ENCODE measurements at regions of chr1 and their contacts with region 1.

Region 1: GRCh38 chr1:180482425-180483275 is 19.7 kb downstream of the ACBD6 start:
- DNase-seq: no peak
- H3K4me3 ChIP-seq: no peak overlapping the region
- CTCF ChIP-seq: no peak
- POLR2A ChIP-seq: no peak

Region 2: GRCh38 chr1:180003026-180003695 is 479.5 kb before region 1 on chr1:
- intact Hi-C with region 1: no loop called
- DNase-seq: no peak
- H3K4me3 ChIP-seq: no peak overlapping the region
- CTCF ChIP-seq: no peak
- POLR2A ChIP-seq: no peak

Region 3: DNA sequence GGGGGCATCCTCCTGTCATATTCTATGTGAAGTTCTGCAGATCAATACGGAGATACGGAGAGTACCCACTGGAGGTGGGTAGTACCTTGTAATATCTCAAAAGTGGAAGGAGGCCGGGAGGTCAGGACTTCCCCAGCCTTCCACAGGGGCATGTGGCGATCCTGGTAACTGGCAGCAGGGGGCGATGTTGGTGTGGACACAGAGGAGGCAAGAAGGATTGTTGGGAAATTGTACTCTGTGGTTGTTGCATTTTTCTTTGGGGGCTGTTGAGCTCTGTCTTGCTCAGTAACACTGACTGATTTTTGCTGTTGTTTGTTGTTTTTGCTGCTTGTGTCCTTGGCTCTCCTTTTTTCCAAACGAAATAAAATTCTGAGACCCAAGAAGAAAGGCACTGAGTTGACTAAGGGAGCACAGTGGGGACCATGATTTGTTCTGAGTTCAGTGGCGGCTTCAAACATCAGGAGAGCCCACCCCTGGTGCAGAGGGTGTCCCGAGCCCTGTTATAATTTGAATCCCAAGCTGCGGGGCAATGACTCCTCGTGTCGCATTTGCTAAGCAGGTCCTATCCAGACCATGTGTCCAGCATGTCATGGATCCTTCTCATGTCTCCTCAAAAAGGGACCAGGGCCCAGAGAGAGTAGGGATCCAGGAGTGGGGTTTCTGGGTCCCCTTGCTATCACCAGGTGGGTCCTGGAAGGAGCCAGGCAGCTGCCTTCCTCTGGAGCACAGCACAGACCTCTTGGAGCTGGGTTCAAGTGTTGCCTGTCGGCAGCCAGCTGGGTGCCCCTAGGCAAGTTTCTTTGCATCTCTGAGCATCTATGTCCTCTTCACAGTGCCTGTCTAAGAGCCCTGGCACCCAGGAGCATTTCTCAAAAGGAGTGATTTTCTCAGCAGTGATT is 229.8 kb before region 1 on chr1:
- intact Hi-C with region 1: loop called (anchors 10 kb)
- DNase-seq: peak; percentile 60 to 92
- H3K4me3 ChIP-seq: no peak overlapping the region
- CTCF ChIP-seq: no peak
- POLR2A ChIP-seq: no peak

Region 4: GRCh38 chr1:180343931-180344769 is 138.5 kb before region 1 on chr1:
- intact Hi-C with region 1: no loop called
- DNase-seq: peak in 1 of 2 donors; percentile 19
- H3K4me3 ChIP-seq: no peak overlapping the region
- CTCF ChIP-seq: no peak
- POLR2A ChIP-seq: no peak

Region 5: DNA sequence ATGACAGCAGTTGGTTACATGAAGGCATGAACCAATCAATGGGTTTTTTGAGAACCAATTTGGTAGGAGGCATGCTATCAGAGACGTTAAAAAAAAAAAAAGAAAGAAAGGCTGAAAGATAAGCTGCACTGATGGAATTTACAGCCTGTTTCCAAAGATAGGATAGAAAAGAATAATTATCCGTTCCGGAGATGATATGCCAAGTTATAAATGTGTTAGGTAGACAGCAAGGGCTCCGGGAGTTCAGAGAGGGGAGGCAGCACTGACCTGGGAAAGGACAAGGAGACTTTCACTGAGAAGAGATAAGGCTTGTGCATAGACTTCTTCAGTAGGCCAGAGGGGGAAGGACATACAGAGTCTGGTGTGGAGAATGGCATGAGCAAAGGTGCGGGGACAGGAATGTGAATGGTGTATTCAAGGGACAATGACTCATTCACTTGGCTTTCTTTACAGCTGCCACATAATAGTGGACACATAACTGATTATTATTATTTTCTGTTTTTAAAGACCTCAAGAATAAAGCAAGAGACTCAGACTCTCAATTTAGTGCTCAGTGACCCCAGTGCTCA is 44.5 kb after region 1 on chr1:
- intact Hi-C with region 1: no loop called
- DNase-seq: no peak
- H3K4me3 ChIP-seq: no peak overlapping the region
- CTCF ChIP-seq: no peak
- POLR2A ChIP-seq: no peak